CD4-positive, alpha-beta memory T cell (primary cell): ENCODE measurements at regions of chr20 and their contacts with region 1.

Region 1: GRCh38 chr20:3811467-3812258 is 8.7 kb upstream of the AP5S1 start:
- DNase-seq: peak; percentile 92 to 97 (median 94)
- H3K4me3 ChIP-seq: peak overlapping the region in 1 of 2 donors; percentile 54
- H3K4me3 Mint-ChIP-seq: peak overlapping the region; percentile 83 to 94 (median 89)
- H3K27ac ChIP-seq: peak overlapping the region; percentile 89
- H3K27ac Mint-ChIP-seq: peak overlapping the region; percentile 97 to 100 (median 99)
- H3K4me1 ChIP-seq: peaks cover 90% of the 10 kb centered on the region
- H3K4me1 Mint-ChIP-seq: peaks cover 53 to 83% (median 69%) of the 10 kb centered on the region in 4 donors
- H3K27me3 ChIP-seq: no peaks in the 10 kb centered on the region
- H3K27me3 Mint-ChIP-seq: no peaks in the 10 kb centered on the region

Region 2: GRCh38 chr20:3045816-3046676 is 765.6 kb before region 1 on chr20 and contains the start of gene MRPS26:
- CTCF ChIA-PET with region 1: no interaction called
- POLR2A ChIA-PET with region 1: no interaction called
- intact Hi-C with region 1: loop called (anchors 5 kb)
- DNase-seq: peak; percentile 71 to 82 (median 79)
- H3K4me3 ChIP-seq: peak within 1 kb of the TSS; percentile 66 to 95
- H3K4me3 Mint-ChIP-seq: peak within 1 kb of the TSS; percentile 81 to 92 (median 89)
- H3K27ac ChIP-seq: peak within 1 kb of the TSS; percentile 62
- H3K27ac Mint-ChIP-seq: peak within 1 kb of the TSS; percentile 73 to 94 (median 80)
- H3K4me1 ChIP-seq: peaks cover 26% of the 10 kb centered on the region
- H3K4me1 Mint-ChIP-seq: peaks cover 13 to 30% (median 15%) of the 10 kb centered on the region in 4 donors
- H3K27me3 ChIP-seq: no peaks in the 10 kb centered on the region
- H3K27me3 Mint-ChIP-seq: no peaks in the 10 kb centered on the region
- total RNA-seq, gene MRPS26: 31.6 to 32.2 TPM

Region 3: GRCh38 chr20:3543901-3544507 is 267.7 kb before region 1 on chr20:
- CTCF ChIA-PET with region 1: no interaction called
- POLR2A ChIA-PET with region 1: no interaction called
- intact Hi-C with region 1: no loop called
- DNase-seq: no peak
- H3K4me3 ChIP-seq: no peak overlapping the region
- H3K4me3 Mint-ChIP-seq: no peak overlapping the region
- H3K27ac ChIP-seq: no peak overlapping the region
- H3K27ac Mint-ChIP-seq: no peak overlapping the region
- H3K4me1 ChIP-seq: no peaks in the 10 kb centered on the region
- H3K4me1 Mint-ChIP-seq: peaks cover 0 to 1% (median 0%) of the 10 kb centered on the region in 4 donors
- H3K27me3 ChIP-seq: no peaks in the 10 kb centered on the region
- H3K27me3 Mint-ChIP-seq: no peaks in the 10 kb centered on the region

Region 4: DNA sequence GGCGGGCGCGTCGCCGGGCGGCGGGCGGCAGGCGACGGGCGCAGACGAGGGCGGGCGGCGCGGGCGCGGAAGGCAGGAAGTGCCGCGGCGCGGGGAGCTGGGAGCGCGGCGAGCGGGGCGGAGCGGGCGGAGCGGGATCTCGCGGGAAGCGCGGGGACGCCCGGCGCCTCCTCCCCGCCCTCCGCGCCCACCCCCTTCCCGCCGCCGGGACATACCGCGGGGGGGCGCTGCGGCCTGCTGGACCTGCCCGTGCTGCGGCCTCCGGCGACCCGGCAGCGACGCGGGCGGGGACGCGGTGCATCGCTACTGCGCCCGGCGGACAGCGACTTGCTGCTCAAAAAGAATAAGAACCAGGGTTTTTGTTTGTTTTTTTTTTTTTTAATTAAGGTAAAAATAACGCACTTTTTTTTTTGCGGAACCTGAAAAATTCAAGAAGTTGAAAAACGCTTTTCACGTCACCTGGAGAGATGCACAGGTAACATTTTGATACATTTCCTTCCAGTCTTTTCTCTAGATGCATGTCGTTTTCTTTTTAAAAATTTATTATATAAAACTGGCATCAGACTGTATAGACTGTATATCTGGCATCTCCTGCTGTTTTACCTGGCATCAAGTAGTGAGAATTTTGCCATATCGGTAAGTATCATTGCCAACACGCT is 24.9 kb before region 1 on chr20 and contains the start of gene CENPB:
- CTCF ChIA-PET with region 1: no interaction called
- POLR2A ChIA-PET with region 1: interaction called, 97 read pairs
- intact Hi-C with region 1: no loop called
- DNase-seq: peak; percentile 82 to 94 (median 88)
- H3K4me3 ChIP-seq: peak within 1 kb of the TSS; percentile 29 to 38
- H3K4me3 Mint-ChIP-seq: peak within 1 kb of the TSS; percentile 74 to 87 (median 84)
- H3K27ac ChIP-seq: peak within 1 kb of the TSS; percentile 12
- H3K27ac Mint-ChIP-seq: peak within 1 kb of the TSS; percentile 79 to 93 (median 88)
- H3K4me1 ChIP-seq: peaks cover 37% of the 10 kb centered on the region
- H3K4me1 Mint-ChIP-seq: peaks cover 23 to 41% (median 33%) of the 10 kb centered on the region in 4 donors
- H3K27me3 ChIP-seq: no peaks in the 10 kb centered on the region
- H3K27me3 Mint-ChIP-seq: no peaks in the 10 kb centered on the region
- total RNA-seq, gene CENPB: 52.2 to 56.7 TPM

Region 5: GRCh38 chr20:3795511-3796468 is 15.9 kb before region 1 on chr20 and contains the start of gene CDC25B:
- CTCF ChIA-PET with region 1: interaction called, 36 read pairs
- POLR2A ChIA-PET with region 1: interaction called, 97 read pairs
- intact Hi-C with region 1: loop called (anchors 1 kb)
- DNase-seq: peak; percentile 83 to 94 (median 85)
- H3K4me3 ChIP-seq: peak within 1 kb of the TSS; percentile 94 to 97
- H3K4me3 Mint-ChIP-seq: peak within 1 kb of the TSS; percentile 98 to 100 (median 100)
- H3K27ac ChIP-seq: peak within 1 kb of the TSS; percentile 86
- H3K27ac Mint-ChIP-seq: peak within 1 kb of the TSS; percentile 95 to 99 (median 97)
- H3K4me1 ChIP-seq: peaks cover 38% of the 10 kb centered on the region
- H3K4me1 Mint-ChIP-seq: peaks cover 21 to 54% (median 35%) of the 10 kb centered on the region in 4 donors
- H3K27me3 ChIP-seq: no peaks in the 10 kb centered on the region
- H3K27me3 Mint-ChIP-seq: no peaks in the 10 kb centered on the region
- total RNA-seq, gene CDC25B: 410 to 420 TPM